ENCODE measurements at regions of chr7 and their contacts with region 1.

Region 1: DNA sequence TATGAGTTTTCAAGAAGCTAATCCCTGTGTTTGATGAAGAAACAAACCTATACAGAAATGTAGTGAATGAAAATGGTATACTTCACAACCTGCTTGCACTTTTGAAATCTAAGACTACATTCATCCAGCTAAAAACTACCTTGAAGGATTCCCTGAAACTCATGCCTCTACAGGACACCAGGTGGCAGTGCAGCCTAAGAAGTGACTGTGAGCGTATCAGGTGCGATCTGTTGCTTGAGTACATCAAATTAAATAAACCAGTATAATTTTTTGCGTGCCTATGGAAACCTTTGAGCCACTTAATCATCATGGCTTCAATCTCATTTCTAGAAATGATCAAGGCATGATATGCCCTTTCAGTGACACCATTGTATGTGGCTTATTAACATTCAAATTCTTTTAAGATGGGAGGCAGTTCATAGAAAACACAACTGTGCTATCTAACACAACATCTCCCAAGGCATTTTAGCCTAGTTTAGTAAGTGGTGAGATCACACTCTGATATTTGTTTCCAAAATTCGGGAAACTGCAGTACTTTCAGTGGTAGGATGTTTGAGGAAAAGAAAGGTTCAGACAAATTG is 57.4 kb downstream of the PPP1R17 start:
- DNase-seq: peak; percentile 62 to 71
- H3K4me3 ChIP-seq: no peak overlapping the region
- H3K4me3 Mint-ChIP-seq: no peak overlapping the region
- H3K27ac Mint-ChIP-seq: no peak overlapping the region
- H3K4me1 ChIP-seq: no peaks in the 10 kb centered on the region
- H3K4me1 Mint-ChIP-seq: peaks cover 7% of the 10 kb centered on the region
- H3K27me3 ChIP-seq: peaks cover 1% of the 10 kb centered on the region
- H3K27me3 Mint-ChIP-seq: peaks cover 17% of the 10 kb centered on the region
- CTCF ChIP-seq: peak; percentile 89 to 94

Region 2: GRCh38 chr7:32037650-32038198 is 293.3 kb after region 1 on chr7:
- CTCF ChIA-PET with region 1: no interaction called
- POLR2A ChIA-PET with region 1: no interaction called
- intact Hi-C with region 1: loop called (anchors 2 kb)
- DNase-seq: no peak
- H3K4me3 ChIP-seq: no peak overlapping the region
- H3K4me3 Mint-ChIP-seq: no peak overlapping the region
- H3K27ac Mint-ChIP-seq: no peak overlapping the region
- H3K4me1 ChIP-seq: peaks cover 6% of the 10 kb centered on the region
- H3K4me1 Mint-ChIP-seq: no peaks in the 10 kb centered on the region
- H3K27me3 ChIP-seq: no peaks in the 10 kb centered on the region; the same call in 1 of the 2 replicates
- H3K27me3 Mint-ChIP-seq: peaks cover 5% of the 10 kb centered on the region
- CTCF ChIP-seq: no peak

Region 3: GRCh38 chr7:32164346-32164957 is 420.1 kb after region 1 on chr7:
- CTCF ChIA-PET with region 1: interaction called, 7 read pairs
- POLR2A ChIA-PET with region 1: no interaction called
- intact Hi-C with region 1: loop called (anchors 1 kb)
- DNase-seq: peak; percentile 51 to 56
- H3K4me3 ChIP-seq: no peak overlapping the region
- H3K4me3 Mint-ChIP-seq: no peak overlapping the region
- H3K27ac Mint-ChIP-seq: no peak overlapping the region
- H3K4me1 ChIP-seq: no peaks in the 10 kb centered on the region; the same call in 1 of the 2 replicates
- H3K4me1 Mint-ChIP-seq: no peaks in the 10 kb centered on the region
- H3K27me3 ChIP-seq: no peaks in the 10 kb centered on the region
- H3K27me3 Mint-ChIP-seq: no peaks in the 10 kb centered on the region
- CTCF ChIP-seq: peak; percentile 50 to 56

Region 4: GRCh38 chr7:32347244-32347828 is 603.0 kb after region 1 on chr7:
- CTCF ChIA-PET with region 1: no interaction called
- POLR2A ChIA-PET with region 1: no interaction called
- intact Hi-C with region 1: loop called (anchors 5 kb)
- DNase-seq: peak in 1 of 2 experiments; percentile 43
- H3K4me3 ChIP-seq: no peak overlapping the region
- H3K4me3 Mint-ChIP-seq: no peak overlapping the region
- H3K27ac Mint-ChIP-seq: no peak overlapping the region
- H3K4me1 ChIP-seq: no peaks in the 10 kb centered on the region
- H3K4me1 Mint-ChIP-seq: no peaks in the 10 kb centered on the region
- H3K27me3 ChIP-seq: no peaks in the 10 kb centered on the region
- H3K27me3 Mint-ChIP-seq: peaks cover 8% of the 10 kb centered on the region
- CTCF ChIP-seq: peak; percentile 68 to 82

Measured in Caco-2 (cell line).